Naive thymus-derived CD4-positive, alpha-beta T cell (primary cell): ENCODE measurements at regions of chr18 and their contacts with region 1.

Region 1: GRCh38 chr18:3593904-3594661 is 144.1 kb downstream of the TGIF1 start:
- DNase-seq: peak; percentile 71 to 96 (median 93)
- ATAC-seq: peak; percentile 82
- H3K4me3 ChIP-seq: peak overlapping the region; percentile 73
- H3K4me3 Mint-ChIP-seq: peak overlapping the region; percentile 84 to 97 (median 93)
- H3K27ac ChIP-seq: peak overlapping the region; percentile 89
- H3K27ac Mint-ChIP-seq: peak overlapping the region; percentile 98 to 100 (median 99)
- H3K4me1 ChIP-seq: peaks cover 31 to 40% of the 10 kb centered on the region in 2 donors
- H3K4me1 Mint-ChIP-seq: peaks cover 32 to 66% (median 57%) of the 10 kb centered on the region in 7 donors
- H3K27me3 ChIP-seq: no peaks in the 10 kb centered on the region
- H3K27me3 Mint-ChIP-seq: no peaks in the 10 kb centered on the region

Region 2: GRCh38 chr18:2641638-2642037 is 952.4 kb before region 1 on chr18:
- CTCF ChIA-PET with region 1: no interaction called
- POLR2A ChIA-PET with region 1: no interaction called
- intact Hi-C with region 1: loop called in 1 of 2 experiments (anchors 10 kb)
- DNase-seq: peak in 7 of 9 donors; percentile 38 to 58 (median 52)
- ATAC-seq: peak; percentile 18
- H3K4me3 ChIP-seq: peak overlapping the region; percentile 36
- H3K4me3 Mint-ChIP-seq: peak overlapping the region in 9 of 10 donors; percentile 73 to 87 (median 84)
- H3K27ac ChIP-seq: peak overlapping the region; percentile 83
- H3K27ac Mint-ChIP-seq: peak overlapping the region in 3 of 9 donors; percentile 91 to 99 (median 95)
- H3K4me1 ChIP-seq: peaks cover 70 to 73% of the 10 kb centered on the region in 2 donors
- H3K4me1 Mint-ChIP-seq: peaks cover 0 to 54% (median 47%) of the 10 kb centered on the region in 7 donors
- H3K27me3 ChIP-seq: no peaks in the 10 kb centered on the region
- H3K27me3 Mint-ChIP-seq: no peaks in the 10 kb centered on the region

Region 3: GRCh38 chr18:3261371-3262246 is 332.5 kb before region 1 on chr18 and contains the start of gene MYL12B:
- CTCF ChIA-PET with region 1: interaction called, 5 read pairs
- POLR2A ChIA-PET with region 1: interaction called, 18 read pairs
- intact Hi-C with region 1: loop called (anchors 1 to 5 kb)
- DNase-seq: peak; percentile 72 to 88 (median 84)
- ATAC-seq: peak; percentile 87
- H3K4me3 ChIP-seq: peak within 1 kb of the TSS; percentile 81
- H3K4me3 Mint-ChIP-seq: peak within 1 kb of the TSS; percentile 87 to 100 (median 96)
- H3K27ac ChIP-seq: peak within 1 kb of the TSS; percentile 96
- H3K27ac Mint-ChIP-seq: peak within 1 kb of the TSS; percentile 95 to 100 (median 99)
- H3K4me1 ChIP-seq: peaks cover 54 to 66% of the 10 kb centered on the region in 2 donors
- H3K4me1 Mint-ChIP-seq: peaks cover 48 to 87% (median 83%) of the 10 kb centered on the region in 7 donors
- H3K27me3 ChIP-seq: no peaks in the 10 kb centered on the region
- H3K27me3 Mint-ChIP-seq: no peaks in the 10 kb centered on the region
- total RNA-seq, gene MYL12B: 140 to 300 (median 169) TPM

Region 4: GRCh38 chr18:3305354-3305762 is 288.7 kb before region 1 on chr18:
- CTCF ChIA-PET with region 1: no interaction called
- POLR2A ChIA-PET with region 1: no interaction called
- intact Hi-C with region 1: loop called in 1 of 2 experiments (anchors 2 kb)
- DNase-seq: peak in 2 of 9 donors; percentile 15 to 37
- ATAC-seq: peak; percentile 94
- H3K4me3 ChIP-seq: no peak overlapping the region
- H3K4me3 Mint-ChIP-seq: peak overlapping the region in 1 of 10 donors; percentile 43
- H3K27ac ChIP-seq: no peak overlapping the region
- H3K27ac Mint-ChIP-seq: peak overlapping the region in 1 of 9 donors; percentile 86
- H3K4me1 ChIP-seq: peaks cover 0 to 7% of the 10 kb centered on the region in 2 donors
- H3K4me1 Mint-ChIP-seq: peaks cover 0 to 20% (median 0%) of the 10 kb centered on the region in 7 donors
- H3K27me3 ChIP-seq: no peaks in the 10 kb centered on the region
- H3K27me3 Mint-ChIP-seq: peaks cover 5 to 22% (median 17%) of the 10 kb centered on the region in 5 donors

Region 5: GRCh38 chr18:3604498-3605408 is 10.7 kb after region 1 on chr18:
- CTCF ChIA-PET with region 1: interaction called, 15 read pairs
- POLR2A ChIA-PET with region 1: interaction called, 55 read pairs
- intact Hi-C with region 1: loop called (anchors 1 kb)
- DNase-seq: peak in 6 of 9 donors; percentile 20 to 55 (median 48)
- ATAC-seq: peak; percentile 71
- H3K4me3 ChIP-seq: peak overlapping the region; percentile 43
- H3K4me3 Mint-ChIP-seq: no peak overlapping the region
- H3K27ac ChIP-seq: peak overlapping the region; percentile 52
- H3K27ac Mint-ChIP-seq: no peak overlapping the region
- H3K4me1 ChIP-seq: peaks cover 32 to 38% of the 10 kb centered on the region in 2 donors
- H3K4me1 Mint-ChIP-seq: peaks cover 0 to 27% (median 7%) of the 10 kb centered on the region in 7 donors
- H3K27me3 ChIP-seq: no peaks in the 10 kb centered on the region
- H3K27me3 Mint-ChIP-seq: no peaks in the 10 kb centered on the region